Mammary epithelial cell (primary cell): ENCODE measurements at regions of chr1 and their contacts with region 1.

Region 1: DNA sequence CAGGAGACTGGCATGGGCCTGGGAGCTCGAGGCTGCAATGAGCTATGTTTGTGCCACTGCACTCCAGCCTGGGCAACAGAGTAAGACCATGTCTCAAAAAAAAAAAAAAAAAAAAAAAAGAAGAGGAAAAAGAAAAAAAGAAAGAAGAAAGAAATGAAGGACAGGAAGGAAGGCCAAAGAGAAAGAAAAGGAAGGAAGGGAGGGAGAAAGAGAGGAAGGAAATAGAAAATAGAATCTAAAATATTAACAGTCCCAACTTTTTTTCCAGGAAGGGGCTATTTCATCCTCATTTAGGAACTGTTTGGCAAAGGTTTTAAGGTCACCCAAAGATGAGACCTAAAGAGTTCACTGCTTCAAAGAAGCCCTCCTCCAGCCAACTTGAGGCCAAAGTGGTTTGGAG is 2.5 kb downstream of the MUL1 start:
- DNase-seq: no peak
- H3K4me3 ChIP-seq: no peak overlapping the region
- H3K27ac ChIP-seq: no peak overlapping the region
- H3K4me1 ChIP-seq: peaks cover 20% of the 10 kb centered on the region
- H3K27me3 ChIP-seq: no peaks in the 10 kb centered on the region
- CTCF ChIP-seq: no peak

Region 2: GRCh38 chr1:19676438-19676922 is 829.0 kb before region 1 on chr1:
- CTCF ChIA-PET with region 1: interaction called, 11 read pairs
- dilution Hi-C with region 1: no loop called
- in situ Hi-C with region 1: no loop called
- intact Hi-C with region 1: no loop called
- DNase-seq: peak; percentile 58
- H3K4me3 ChIP-seq: no peak overlapping the region
- H3K27ac ChIP-seq: no peak overlapping the region
- H3K4me1 ChIP-seq: no peaks in the 10 kb centered on the region
- H3K27me3 ChIP-seq: no peaks in the 10 kb centered on the region
- CTCF ChIP-seq: no peak

Region 3: DNA sequence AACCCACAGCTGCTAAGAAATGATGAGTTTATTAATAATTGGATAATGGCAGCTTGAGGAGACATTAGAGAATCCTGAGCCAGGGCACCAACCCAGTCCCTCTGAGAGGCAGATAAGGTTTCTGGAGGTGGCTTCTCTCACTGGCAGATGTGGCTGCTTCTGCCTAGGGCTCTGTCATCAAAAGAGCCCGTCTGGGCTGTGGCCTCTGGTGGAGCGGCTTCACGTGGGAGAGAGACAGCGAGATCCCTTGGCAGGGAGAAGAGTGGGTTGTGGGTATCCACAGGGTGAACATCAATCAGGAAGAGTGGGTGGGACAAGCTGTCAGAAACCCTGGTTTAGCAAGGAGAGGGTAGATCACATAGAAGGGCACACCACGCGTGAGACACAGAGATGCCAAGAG is 184.8 kb before region 1 on chr1:
- CTCF ChIA-PET with region 1: no interaction called
- dilution Hi-C with region 1: no loop called
- in situ Hi-C with region 1: no loop called
- intact Hi-C with region 1: no loop called
- DNase-seq: no peak
- H3K4me3 ChIP-seq: no peak overlapping the region
- H3K27ac ChIP-seq: no peak overlapping the region
- H3K4me1 ChIP-seq: no peaks in the 10 kb centered on the region
- H3K27me3 ChIP-seq: no peaks in the 10 kb centered on the region
- CTCF ChIP-seq: no peak

Region 4: DNA sequence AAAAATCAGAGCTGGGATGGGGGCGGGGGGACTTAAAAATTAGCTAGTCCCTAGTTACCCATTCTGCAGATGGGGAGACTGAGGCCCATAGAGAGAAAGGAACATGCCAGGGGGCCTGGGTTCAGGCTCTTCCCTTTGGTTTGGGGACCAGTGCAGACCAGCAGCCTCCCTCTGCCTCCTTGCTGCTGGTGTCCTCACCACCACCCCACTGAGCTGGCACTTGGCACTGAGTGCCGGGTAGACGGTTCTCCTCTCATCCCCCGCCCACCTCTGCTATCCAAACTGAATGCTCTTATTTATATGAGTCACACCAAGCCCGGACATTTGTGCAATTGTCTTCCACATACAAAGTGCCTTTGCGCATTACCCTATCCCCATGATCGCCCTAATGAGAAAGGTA is 58.7 kb before region 1 on chr1:
- CTCF ChIA-PET with region 1: no interaction called
- dilution Hi-C with region 1: no loop called
- in situ Hi-C with region 1: no loop called
- intact Hi-C with region 1: no loop called
- DNase-seq: peak; percentile 57
- H3K4me3 ChIP-seq: no peak overlapping the region
- H3K27ac ChIP-seq: no peak overlapping the region
- H3K4me1 ChIP-seq: peaks cover 11% of the 10 kb centered on the region
- H3K27me3 ChIP-seq: no peaks in the 10 kb centered on the region
- CTCF ChIP-seq: no peak